ENCODE measurements at regions of chr12 and their contacts with region 1.

Region 1: GRCh38 chr12:65119063-65119462 is 2.0 kb downstream of the WIF1 start:
- DNase-seq: no peak
- ATAC-seq: no peak
- H3K4me3 ChIP-seq: no peak overlapping the region
- H3K27ac ChIP-seq: no peak overlapping the region
- H3K4me1 ChIP-seq: peaks cover 10% of the 10 kb centered on the region
- H3K27me3 ChIP-seq: peaks cover 0 to 20% of the 10 kb centered on the region in 2 donors
- CTCF ChIP-seq: no peak
- POLR2A ChIP-seq: no peak

Region 2: GRCh38 chr12:64890873-64891468 is 228.1 kb before region 1 on chr12:
- intact Hi-C with region 1: loop called (anchors 5 kb)
- DNase-seq: peak in 1 of 4 donors; percentile 9
- ATAC-seq: peak; percentile 78
- H3K4me3 ChIP-seq: no peak overlapping the region
- H3K27ac ChIP-seq: no peak overlapping the region
- H3K4me1 ChIP-seq: no peaks in the 10 kb centered on the region
- H3K27me3 ChIP-seq: no peaks in the 10 kb centered on the region
- CTCF ChIP-seq: peak; percentile 42 to 93 (median 85)
- POLR2A ChIP-seq: no peak

Region 3: DNA sequence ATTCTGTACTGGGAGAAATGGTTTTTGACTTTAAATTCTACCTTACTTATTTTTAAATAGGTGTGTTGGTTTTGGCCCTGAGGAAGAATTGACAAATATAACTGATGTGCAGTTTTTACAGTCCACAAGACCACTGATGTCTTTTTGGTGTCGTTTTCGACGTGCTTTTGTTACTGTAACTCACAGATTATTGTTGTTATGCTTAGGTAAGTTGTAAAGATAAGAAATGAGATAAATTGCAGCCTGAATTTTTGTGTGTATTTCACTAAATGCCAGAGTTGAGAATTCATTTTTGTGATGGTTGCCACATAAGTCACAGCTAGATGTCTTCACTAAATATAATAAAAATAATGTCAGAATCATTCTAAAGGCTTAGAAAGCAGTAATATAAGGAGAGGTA is 119.5 kb after region 1 on chr12:
- intact Hi-C with region 1: no loop called
- DNase-seq: no peak
- ATAC-seq: no peak
- H3K4me3 ChIP-seq: no peak overlapping the region
- H3K27ac ChIP-seq: no peak overlapping the region
- H3K4me1 ChIP-seq: no peaks in the 10 kb centered on the region
- H3K27me3 ChIP-seq: no peaks in the 10 kb centered on the region
- CTCF ChIP-seq: no peak
- POLR2A ChIP-seq: no peak

Region 4: GRCh38 chr12:65269603-65270002 is 150.5 kb after region 1 on chr12:
- intact Hi-C with region 1: no loop called
- DNase-seq: no peak
- ATAC-seq: no peak
- H3K4me3 ChIP-seq: no peak overlapping the region
- H3K27ac ChIP-seq: no peak overlapping the region
- H3K4me1 ChIP-seq: peaks cover 3% of the 10 kb centered on the region
- H3K27me3 ChIP-seq: no peaks in the 10 kb centered on the region
- CTCF ChIP-seq: no peak
- POLR2A ChIP-seq: no peak

Measured in body of pancreas (tissue), 4 donors.